MCF 10A (cell line): ENCODE measurements at regions of chr6 and their contacts with region 1.

Region 1: GRCh38 chr6:117591405-117591804 is 10.9 kb downstream of the GOPC start:
- DNase-seq: no peak
- H3K4me3 Mint-ChIP-seq: no peak overlapping the region
- H3K27ac Mint-ChIP-seq: peak overlapping the region; percentile 11
- H3K4me1 Mint-ChIP-seq: peaks cover 11% of the 10 kb centered on the region
- H3K27me3 Mint-ChIP-seq: no peaks in the 10 kb centered on the region
- CTCF ChIP-seq: no peak

Region 2: GRCh38 chr6:117072134-117072533 is 519.3 kb before region 1 on chr6:
- CTCF ChIA-PET with region 1: no interaction called
- POLR2A ChIA-PET with region 1: no interaction called
- intact Hi-C with region 1: no loop called
- DNase-seq: peak; percentile 75
- H3K4me3 Mint-ChIP-seq: no peak overlapping the region
- H3K27ac Mint-ChIP-seq: no peak overlapping the region
- H3K4me1 Mint-ChIP-seq: no peaks in the 10 kb centered on the region
- H3K27me3 Mint-ChIP-seq: peaks cover 51% of the 10 kb centered on the region
- CTCF ChIP-seq: no peak

Region 3: DNA sequence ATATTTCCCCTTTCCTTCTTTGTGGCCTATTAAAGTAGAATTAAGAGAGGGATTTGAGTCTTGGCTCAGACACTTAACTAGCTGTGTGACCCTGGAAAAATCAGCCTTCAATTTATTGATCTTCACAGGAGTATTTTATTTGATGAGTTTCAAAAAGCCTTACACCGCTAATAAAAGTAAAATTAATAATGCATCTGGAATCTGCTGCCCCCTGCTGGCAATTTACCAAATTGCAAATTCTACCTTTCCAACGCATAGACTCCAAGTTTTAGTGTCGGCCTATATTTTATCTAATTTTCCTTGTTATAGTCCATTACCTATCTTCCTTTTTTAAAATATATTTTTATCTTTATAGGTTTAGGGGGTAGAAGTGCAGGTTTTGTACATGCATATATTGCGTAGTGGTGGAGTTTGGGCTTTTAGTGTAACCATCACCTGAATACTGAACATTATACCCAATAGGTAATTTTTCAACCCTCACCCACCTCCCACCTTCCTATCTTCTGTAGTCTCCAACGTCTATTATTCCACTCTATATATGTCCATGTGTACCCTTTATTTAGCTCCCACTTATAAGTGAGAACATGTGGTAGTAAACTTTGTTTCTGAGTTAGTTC is 35.4 kb before region 1 on chr6:
- CTCF ChIA-PET with region 1: interaction called, 10 read pairs
- POLR2A ChIA-PET with region 1: no interaction called
- intact Hi-C with region 1: no loop called
- DNase-seq: peak; percentile 67
- H3K4me3 Mint-ChIP-seq: no peak overlapping the region
- H3K27ac Mint-ChIP-seq: no peak overlapping the region
- H3K4me1 Mint-ChIP-seq: peaks cover 22% of the 10 kb centered on the region
- H3K27me3 Mint-ChIP-seq: no peaks in the 10 kb centered on the region
- CTCF ChIP-seq: peak; percentile 75

Region 4: DNA sequence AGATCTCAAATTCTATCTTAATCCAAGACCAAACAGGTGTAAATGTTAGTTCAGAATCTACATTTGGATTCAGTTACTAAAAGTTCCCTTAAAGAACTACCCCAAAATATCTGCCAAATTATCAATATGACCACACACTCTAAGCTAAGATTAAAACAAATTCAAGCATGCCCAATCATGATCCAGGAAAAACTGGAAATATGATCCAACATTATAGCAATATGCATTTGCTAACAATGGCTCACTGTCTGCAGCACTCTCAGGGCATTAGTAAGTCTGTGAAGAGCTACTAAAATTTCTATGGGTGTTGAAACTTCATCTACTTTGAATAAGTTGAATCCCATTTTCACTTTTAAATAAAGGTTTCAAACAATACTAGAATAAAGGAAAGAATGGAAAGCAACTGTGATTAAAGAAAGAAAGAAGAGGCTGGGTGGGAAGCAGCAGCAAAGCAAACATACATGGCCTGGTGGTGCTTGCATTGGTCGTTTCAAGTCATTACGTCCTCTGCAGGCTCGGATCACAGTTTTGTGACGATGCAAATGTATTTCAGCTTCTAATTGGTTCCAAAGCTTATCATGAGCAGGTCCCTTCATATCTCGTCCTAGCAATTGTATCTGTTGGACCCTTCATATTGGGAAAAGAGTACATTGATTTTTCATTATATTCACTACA is 18.3 kb before region 1 on chr6:
- CTCF ChIA-PET with region 1: interaction called, 11 read pairs
- POLR2A ChIA-PET with region 1: no interaction called
- intact Hi-C with region 1: no loop called
- DNase-seq: no peak
- H3K4me3 Mint-ChIP-seq: no peak overlapping the region
- H3K27ac Mint-ChIP-seq: no peak overlapping the region
- H3K4me1 Mint-ChIP-seq: peaks cover 13% of the 10 kb centered on the region
- H3K27me3 Mint-ChIP-seq: no peaks in the 10 kb centered on the region
- CTCF ChIP-seq: no peak